Naive thymus-derived CD8-positive, alpha-beta T cell (primary cell): ENCODE measurements at regions of chr3 and their contacts with region 1.

Region 1: GRCh38 chr3:49339945-49340800 is at the start of gene USP4:
- DNase-seq: peak; percentile 81 to 96 (median 88)
- ATAC-seq: peak; percentile 87 to 89
- H3K4me3 Mint-ChIP-seq: peak within 1 kb of the TSS; percentile 82 to 99 (median 92)
- H3K27ac Mint-ChIP-seq: peak within 1 kb of the TSS; percentile 97 to 99 (median 98)
- H3K4me1 Mint-ChIP-seq: peaks cover 30 to 57% (median 45%) of the 10 kb centered on the region in 4 donors
- H3K27me3 Mint-ChIP-seq: no peaks in the 10 kb centered on the region
- polyA plus RNA-seq, gene USP4: 49.6 to 69.1 (median 50.6) TPM

Region 2: GRCh38 chr3:49021813-49022687 is 318.1 kb before region 1 on chr3 and contains the start of gene NDUFAF3:
- POLR2A ChIA-PET with region 1: interaction called, 13 read pairs
- DNase-seq: peak; percentile 81 to 93 (median 90)
- ATAC-seq: peak; percentile 77 to 83
- H3K4me3 Mint-ChIP-seq: peak within 1 kb of the TSS; percentile 90 to 99 (median 98)
- H3K27ac Mint-ChIP-seq: peak within 1 kb of the TSS; percentile 96 to 99 (median 98)
- H3K4me1 Mint-ChIP-seq: peaks cover 12 to 65% (median 52%) of the 10 kb centered on the region in 4 donors
- H3K27me3 Mint-ChIP-seq: peaks cover 0 to 1% (median 0%) of the 10 kb centered on the region in 5 donors
- polyA plus RNA-seq, gene NDUFAF3: 140 to 226 (median 202) TPM

Region 3: DNA sequence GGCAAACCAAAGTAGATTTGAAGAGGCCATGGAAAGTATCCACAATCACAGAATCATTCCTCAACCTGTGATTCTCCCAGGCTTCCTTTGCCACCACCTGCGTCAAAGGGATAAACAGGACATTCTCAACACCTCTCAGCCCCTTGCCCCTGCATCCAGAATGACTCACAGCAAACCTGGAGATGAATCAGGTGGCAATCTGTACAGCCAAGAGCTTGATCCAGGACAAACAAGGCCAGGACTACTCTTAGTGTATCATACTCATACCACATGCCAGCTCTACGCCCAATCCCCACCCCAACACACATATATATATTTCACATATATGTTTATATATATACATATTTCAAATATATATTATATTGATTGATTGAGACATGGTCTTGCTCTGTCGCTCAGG is 39.6 kb before region 1 on chr3:
- POLR2A ChIA-PET with region 1: no interaction called
- DNase-seq: no peak
- ATAC-seq: no peak
- H3K4me3 Mint-ChIP-seq: no peak overlapping the region
- H3K27ac Mint-ChIP-seq: peak overlapping the region in 4 of 10 donors; percentile 16 to 74 (median 50)
- H3K4me1 Mint-ChIP-seq: no peaks in the 10 kb centered on the region
- H3K27me3 Mint-ChIP-seq: no peaks in the 10 kb centered on the region

Region 4: DNA sequence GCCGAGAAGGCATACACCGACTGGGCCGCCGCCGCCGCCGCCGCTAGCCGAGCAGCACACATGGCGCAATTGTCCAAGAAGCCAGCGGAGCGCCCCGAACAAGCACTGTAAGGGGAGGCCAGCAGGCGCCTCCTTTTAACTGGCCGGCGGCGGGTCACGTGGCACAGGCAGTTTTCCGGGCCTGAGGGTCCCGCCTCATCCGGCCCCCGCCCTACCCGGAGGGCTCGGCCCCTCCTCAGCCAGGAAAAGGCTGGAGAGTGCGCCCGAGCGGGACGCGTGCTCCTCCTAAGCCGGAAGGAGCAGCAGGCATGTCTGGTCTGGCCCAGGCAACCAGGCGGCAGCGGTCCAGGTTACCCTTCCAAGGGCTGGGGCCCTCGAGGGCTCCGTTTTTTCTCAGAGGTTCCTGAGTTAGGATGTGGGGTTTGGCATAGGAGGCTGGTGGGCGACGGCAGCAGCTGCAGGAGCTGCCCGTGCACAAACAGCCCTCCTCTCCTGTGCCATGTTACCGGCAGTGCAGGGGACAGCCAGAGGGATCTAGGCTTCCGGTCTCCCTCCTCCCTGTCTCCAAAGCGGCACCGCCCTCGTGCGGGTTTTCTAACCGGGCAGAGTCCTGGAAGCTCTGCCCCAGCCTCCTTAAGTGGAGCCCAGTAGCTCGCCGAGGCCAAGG is 18.2 kb after region 1 on chr3 and contains the start of gene GPX1:
- POLR2A ChIA-PET with region 1: interaction called, 69 read pairs
- DNase-seq: peak; percentile 49 to 88 (median 69)
- ATAC-seq: peak; percentile 65 to 77
- H3K4me3 Mint-ChIP-seq: peak within 1 kb of the TSS; percentile 87 to 98 (median 95)
- H3K27ac Mint-ChIP-seq: peak within 1 kb of the TSS; percentile 90 to 99 (median 96)
- H3K4me1 Mint-ChIP-seq: peaks cover 16 to 48% (median 36%) of the 10 kb centered on the region in 4 donors
- H3K27me3 Mint-ChIP-seq: no peaks in the 10 kb centered on the region
- polyA plus RNA-seq, gene GPX1: 149 to 249 (median 224) TPM

Region 5: GRCh38 chr3:49428697-49429100 is 88.5 kb after region 1 on chr3:
- POLR2A ChIA-PET with region 1: interaction called, 32 read pairs
- DNase-seq: no peak
- ATAC-seq: peak; percentile 15
- H3K4me3 Mint-ChIP-seq: peak overlapping the region; percentile 90 to 96 (median 92)
- H3K27ac Mint-ChIP-seq: peak overlapping the region; percentile 88 to 98 (median 94)
- H3K4me1 Mint-ChIP-seq: peaks cover 12 to 29% (median 22%) of the 10 kb centered on the region in 4 donors
- H3K27me3 Mint-ChIP-seq: no peaks in the 10 kb centered on the region

Region 6: GRCh38 chr3:49454458-49454857 is 114.3 kb after region 1 on chr3:
- POLR2A ChIA-PET with region 1: interaction called, 35 read pairs
- DNase-seq: no peak
- ATAC-seq: no peak
- H3K4me3 Mint-ChIP-seq: no peak overlapping the region
- H3K27ac Mint-ChIP-seq: peak overlapping the region in 3 of 10 donors; percentile 28 to 83 (median 43)
- H3K4me1 Mint-ChIP-seq: no peaks in the 10 kb centered on the region
- H3K27me3 Mint-ChIP-seq: no peaks in the 10 kb centered on the region